AG04450 (cell line): ENCODE measurements at regions of chr17 and their contacts with region 1.

Region 1: GRCh38 chr17:43648916-43649315 is 12.8 kb downstream of the MEOX1 start:
- DNase-seq: no peak
- H3K4me3 ChIP-seq: no peak overlapping the region
- H3K27ac ChIP-seq: no peak overlapping the region
- H3K27me3 ChIP-seq: no peaks in the 10 kb centered on the region
- CTCF ChIP-seq: no peak

Region 2: DNA sequence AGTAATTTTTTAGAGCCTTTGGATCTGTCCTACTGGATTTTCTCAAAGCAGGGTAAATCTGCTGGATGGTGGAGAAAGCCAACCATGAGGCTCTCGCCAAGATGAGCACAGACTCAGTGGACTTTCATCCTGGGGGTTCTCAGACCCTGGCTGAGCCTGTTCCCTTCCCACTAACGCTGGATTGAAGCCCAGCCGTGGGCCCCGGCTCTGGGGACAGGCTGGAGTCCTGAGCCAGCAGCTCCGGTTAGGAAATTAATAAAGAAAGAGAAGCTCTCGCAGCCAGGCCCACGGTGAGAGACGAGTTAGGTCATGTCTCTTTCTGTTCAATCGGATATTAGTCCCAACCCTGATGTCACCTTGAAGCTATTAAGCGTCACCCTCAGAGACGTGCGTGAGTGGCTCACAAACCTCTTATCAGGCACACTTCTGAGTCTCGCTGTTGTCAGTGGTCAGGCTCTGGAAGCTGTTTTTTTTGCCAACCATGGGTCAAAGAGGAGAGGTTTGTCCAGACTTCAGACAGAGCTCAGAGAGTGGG is 14.3 kb before region 1 on chr17:
- CTCF ChIA-PET with region 1: no interaction called
- POLR2A ChIA-PET with region 1: interaction called, 14 read pairs
- DNase-seq: no peak
- H3K4me3 ChIP-seq: no peak overlapping the region
- H3K27ac ChIP-seq: no peak overlapping the region
- H3K27me3 ChIP-seq: peaks cover 13% of the 10 kb centered on the region
- CTCF ChIP-seq: no peak

Region 3: DNA sequence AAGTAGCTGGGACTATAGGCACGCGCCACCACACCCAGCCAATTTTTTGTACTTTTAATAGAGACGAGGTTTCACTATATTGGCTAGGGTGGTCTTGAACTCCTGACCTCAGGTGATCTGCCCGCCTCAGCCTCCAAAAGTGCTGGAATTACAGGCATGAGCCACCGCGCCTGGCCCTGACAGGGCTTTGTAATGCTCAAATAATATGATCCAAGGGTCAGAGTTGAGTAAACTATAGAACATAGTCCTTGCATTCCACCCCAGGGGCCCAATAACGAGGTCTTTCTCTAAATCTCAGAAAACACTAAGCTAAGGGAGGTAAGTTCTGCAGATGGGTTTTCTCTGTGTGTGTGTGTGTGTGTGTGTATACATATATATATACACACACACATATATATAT is 18.6 kb after region 1 on chr17:
- CTCF ChIA-PET with region 1: no interaction called
- POLR2A ChIA-PET with region 1: no interaction called
- DNase-seq: no peak
- H3K4me3 ChIP-seq: no peak overlapping the region
- H3K27ac ChIP-seq: no peak overlapping the region
- H3K27me3 ChIP-seq: peaks cover 3% of the 10 kb centered on the region
- CTCF ChIP-seq: no peak